GM12878 (cell line): ENCODE measurements at regions of chr20 and their contacts with region 1.

Region 1: DNA sequence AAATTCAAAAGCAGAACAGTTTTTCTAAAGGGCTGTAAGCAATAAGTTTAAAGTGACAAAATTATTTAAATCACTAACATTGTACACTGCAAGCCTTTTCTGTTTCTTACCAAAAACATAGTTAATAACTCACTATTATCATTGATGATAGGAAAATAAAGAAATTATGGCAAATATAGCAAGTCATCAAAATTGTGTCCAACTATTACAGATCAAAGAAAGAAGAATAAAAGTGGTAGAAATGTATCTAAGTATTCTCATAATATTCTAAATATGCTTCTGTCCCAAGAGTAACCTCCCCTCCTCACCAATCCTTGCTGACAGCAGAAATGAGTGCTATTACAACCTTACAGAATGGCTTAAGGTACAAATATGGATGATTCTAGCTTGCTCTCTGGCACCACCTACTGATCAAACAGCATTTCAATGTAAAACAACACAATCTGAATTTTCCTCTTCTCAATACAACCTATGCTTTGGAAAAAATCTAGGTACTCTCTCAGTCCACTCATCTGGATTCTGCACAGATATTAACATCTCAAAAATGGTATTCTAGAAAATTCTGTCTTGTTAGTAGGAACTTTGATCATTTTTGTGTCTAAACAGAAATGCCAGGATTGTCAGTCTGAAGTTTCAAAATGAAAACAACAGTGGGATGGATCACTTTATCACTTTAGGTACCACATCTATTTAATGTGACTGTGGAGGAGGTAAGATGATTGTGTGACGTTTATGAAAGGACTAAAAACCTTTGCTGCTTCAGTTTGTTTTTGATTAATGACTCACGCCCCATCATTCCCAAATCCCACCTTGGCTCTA is 40.9 kb downstream of the ZFP64 start:
- DNase-seq: peak; percentile 24
- ATAC-seq: peak; percentile 78
- H3K4me3 ChIP-seq: no peak overlapping the region
- H3K27ac ChIP-seq: no peak overlapping the region
- H3K4me1 ChIP-seq: no peaks in the 10 kb centered on the region
- H3K27me3 ChIP-seq: no peaks in the 10 kb centered on the region
- CTCF ChIP-seq: peak; percentile 74 to 82 (median 76)
- EP300 ChIP-seq: no peak
- POLR2A ChIP-seq: no peak
- RAD21 ChIP-seq: peak; percentile 71

Region 2: GRCh38 chr20:51404298-51405060 is 746.2 kb before region 1 on chr20:
- CTCF ChIA-PET with region 1: no interaction called
- POLR2A ChIA-PET with region 1: no interaction called
- RAD21 ChIA-PET with region 1: no interaction called
- SMC1A ChIA-PET with region 1: no interaction called
- in situ Hi-C with region 1: loop called (anchors 25 kb)
- intact Hi-C with region 1: no loop called
- DNase-seq: peak; percentile 80
- ATAC-seq: peak; percentile 88
- H3K4me3 ChIP-seq: no peak overlapping the region
- H3K27ac ChIP-seq: peak overlapping the region; percentile 73
- H3K4me1 ChIP-seq: peaks cover 61% of the 10 kb centered on the region
- H3K27me3 ChIP-seq: no peaks in the 10 kb centered on the region
- CTCF ChIP-seq: no peak
- EP300 ChIP-seq: peak; percentile 16 to 77; a peak in 2 of 4 replicates
- POLR2A ChIP-seq: peak; percentile 70
- RAD21 ChIP-seq: no peak

Region 3: DNA sequence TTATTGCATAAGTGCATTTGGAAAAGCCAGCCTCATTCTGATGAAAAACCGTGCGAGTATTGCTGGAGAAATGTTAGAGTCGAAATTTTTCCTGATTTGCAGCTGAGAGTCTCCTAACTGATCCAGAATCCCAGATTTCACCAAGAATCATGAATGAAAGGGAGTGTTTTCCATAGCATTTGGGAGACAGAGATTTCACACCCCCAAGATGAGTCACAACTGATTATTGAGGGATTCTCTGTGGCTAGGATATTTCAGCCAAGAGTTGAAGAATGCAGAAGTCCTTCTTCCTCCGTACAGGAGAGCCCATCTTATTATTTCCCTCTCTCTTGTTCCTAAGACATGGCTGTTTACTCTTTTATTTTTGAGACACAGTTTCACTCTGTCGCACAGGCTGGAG is 266.1 kb before region 1 on chr20:
- CTCF ChIA-PET with region 1: no interaction called
- POLR2A ChIA-PET with region 1: no interaction called
- RAD21 ChIA-PET with region 1: no interaction called
- SMC1A ChIA-PET with region 1: no interaction called
- in situ Hi-C with region 1: no loop called
- intact Hi-C with region 1: no loop called
- DNase-seq: no peak
- ATAC-seq: no peak
- H3K4me3 ChIP-seq: no peak overlapping the region
- H3K27ac ChIP-seq: no peak overlapping the region
- H3K4me1 ChIP-seq: no peaks in the 10 kb centered on the region
- H3K27me3 ChIP-seq: no peaks in the 10 kb centered on the region
- CTCF ChIP-seq: no peak
- EP300 ChIP-seq: no peak
- POLR2A ChIP-seq: no peak
- RAD21 ChIP-seq: no peak